ENCODE measurements at regions of chr11 and their contacts with region 1.

Region 1: DNA sequence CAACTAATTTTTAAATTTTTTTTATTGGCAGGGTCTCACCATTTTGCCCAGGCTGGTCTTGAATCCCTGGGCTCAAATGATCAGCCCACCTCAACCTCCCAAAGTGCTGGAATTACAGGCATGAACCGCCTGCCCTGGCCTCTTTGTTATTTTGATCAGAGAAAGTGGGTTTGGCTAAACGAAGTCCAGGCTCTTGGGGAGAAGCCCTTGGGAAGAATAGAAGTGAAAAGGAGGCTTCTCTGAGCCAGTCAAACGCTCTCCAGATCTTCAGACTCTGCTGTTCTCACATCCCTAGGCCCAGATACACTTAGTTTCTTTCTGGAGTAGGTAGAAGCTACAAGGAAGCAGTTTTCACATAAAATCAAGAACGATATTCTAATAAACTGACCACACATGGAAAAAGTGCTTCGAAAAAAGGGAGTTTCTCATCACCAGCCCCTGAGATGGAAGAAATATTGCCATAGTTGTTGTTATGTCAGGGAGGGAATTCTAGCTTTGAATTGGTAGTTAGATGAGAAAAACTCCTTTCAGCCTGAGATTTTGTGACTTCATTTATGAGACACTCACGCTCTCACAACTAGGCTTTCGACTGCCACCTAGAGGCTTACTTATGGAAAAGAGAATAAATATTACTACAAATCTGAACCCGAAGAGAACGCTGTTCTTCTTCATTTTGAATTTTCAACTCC is 41.7 kb upstream of the AQP11 start:
- DNase-seq: peak; percentile 56
- ATAC-seq: peak; percentile 60
- H3K4me3 ChIP-seq: no peak overlapping the region
- H3K27ac ChIP-seq: no peak overlapping the region
- H3K4me1 ChIP-seq: no peaks in the 10 kb centered on the region
- H3K27me3 ChIP-seq: no peaks in the 10 kb centered on the region
- CTCF ChIP-seq: peak; percentile 72
- EP300 ChIP-seq: no peak
- POLR2A ChIP-seq: no peak
- RAD21 ChIP-seq: peak; percentile 46; the same call in 1 of the 2 replicates

Region 2: GRCh38 chr11:77127232-77127911 is 420.6 kb before region 1 on chr11:
- CTCF ChIA-PET with region 1: interaction called, 6 read pairs
- POLR2A ChIA-PET with region 1: no interaction called
- in situ Hi-C with region 1: no loop called
- intact Hi-C with region 1: loop called (anchors 2 kb)
- DNase-seq: no peak
- ATAC-seq: peak; percentile 54
- H3K4me3 ChIP-seq: peak overlapping the region; percentile 53 to 80 (median 54); a peak in 5 of 6 replicates
- H3K27ac ChIP-seq: peak overlapping the region; percentile 12
- H3K4me1 ChIP-seq: peaks cover 57% of the 10 kb centered on the region
- H3K27me3 ChIP-seq: peaks cover 0 to 13% of the 10 kb centered on the region in 2 experiments; a peak in 1 of 5 replicates
- CTCF ChIP-seq: peak; percentile 98
- EP300 ChIP-seq: no peak
- POLR2A ChIP-seq: no peak
- RAD21 ChIP-seq: peak; percentile 99

Region 3: GRCh38 chr11:77187776-77188632 is 360.0 kb before region 1 on chr11:
- CTCF ChIA-PET with region 1: interaction called, 12 read pairs
- POLR2A ChIA-PET with region 1: no interaction called
- in situ Hi-C with region 1: no loop called
- intact Hi-C with region 1: loop called (anchors 1 kb)
- DNase-seq: peak; percentile 73
- ATAC-seq: peak; percentile 87
- H3K4me3 ChIP-seq: no peak overlapping the region
- H3K27ac ChIP-seq: no peak overlapping the region
- H3K4me1 ChIP-seq: no peaks in the 10 kb centered on the region
- H3K27me3 ChIP-seq: no peaks in the 10 kb centered on the region
- CTCF ChIP-seq: peak; percentile 94
- EP300 ChIP-seq: no peak
- POLR2A ChIP-seq: no peak
- RAD21 ChIP-seq: peak; percentile 85

Region 4: GRCh38 chr11:77198440-77198849 is 349.6 kb before region 1 on chr11:
- CTCF ChIA-PET with region 1: interaction called, 6 read pairs
- POLR2A ChIA-PET with region 1: no interaction called
- in situ Hi-C with region 1: loop called (anchors 5 kb)
- intact Hi-C with region 1: no loop called
- DNase-seq: peak; percentile 41
- ATAC-seq: peak; percentile 81
- H3K4me3 ChIP-seq: no peak overlapping the region
- H3K27ac ChIP-seq: no peak overlapping the region
- H3K4me1 ChIP-seq: no peaks in the 10 kb centered on the region
- H3K27me3 ChIP-seq: no peaks in the 10 kb centered on the region
- CTCF ChIP-seq: peak; percentile 63
- EP300 ChIP-seq: no peak
- POLR2A ChIP-seq: no peak
- RAD21 ChIP-seq: no peak

Region 5: GRCh38 chr11:77457340-77457739 is 90.7 kb before region 1 on chr11:
- CTCF ChIA-PET with region 1: no interaction called
- POLR2A ChIA-PET with region 1: no interaction called
- in situ Hi-C with region 1: no loop called
- intact Hi-C with region 1: no loop called
- DNase-seq: no peak
- ATAC-seq: no peak
- H3K4me3 ChIP-seq: no peak overlapping the region
- H3K27ac ChIP-seq: no peak overlapping the region
- H3K4me1 ChIP-seq: peaks cover 14% of the 10 kb centered on the region
- H3K27me3 ChIP-seq: no peaks in the 10 kb centered on the region; a peak in 1 of 5 replicates
- CTCF ChIP-seq: no peak
- EP300 ChIP-seq: no peak
- POLR2A ChIP-seq: no peak
- RAD21 ChIP-seq: no peak

Region 6: GRCh38 chr11:77473801-77474683 is 74.0 kb before region 1 on chr11 and contains the start of gene PAK1:
- CTCF ChIA-PET with region 1: no interaction called
- POLR2A ChIA-PET with region 1: no interaction called
- in situ Hi-C with region 1: no loop called
- intact Hi-C with region 1: loop called (anchors 5 kb)
- DNase-seq: peak; percentile 54
- ATAC-seq: peak; percentile 92
- H3K4me3 ChIP-seq: peak within 1 kb of the TSS; percentile 53 to 72 (median 63)
- H3K27ac ChIP-seq: no peak within 1 kb of the TSS
- H3K4me1 ChIP-seq: peaks cover 51% of the 10 kb centered on the region
- H3K27me3 ChIP-seq: peaks cover under 1 to 24% of the 10 kb centered on the region in 2 experiments; a peak in 2 of 5 replicates
- CTCF ChIP-seq: peak; percentile 58
- EP300 ChIP-seq: no peak
- POLR2A ChIP-seq: no peak
- RAD21 ChIP-seq: no peak
- total RNA-seq, gene PAK1: 1.5 and 3.1 TPM in 2 replicates

Region 7: GRCh38 chr11:77503015-77503414 is 45.0 kb before region 1 on chr11:
- CTCF ChIA-PET with region 1: no interaction called
- POLR2A ChIA-PET with region 1: no interaction called
- in situ Hi-C with region 1: no loop called
- intact Hi-C with region 1: no loop called
- DNase-seq: no peak
- ATAC-seq: no peak
- H3K4me3 ChIP-seq: no peak overlapping the region
- H3K27ac ChIP-seq: no peak overlapping the region
- H3K4me1 ChIP-seq: no peaks in the 10 kb centered on the region
- H3K27me3 ChIP-seq: no peaks in the 10 kb centered on the region; a peak in 2 of 5 replicates
- CTCF ChIP-seq: no peak
- EP300 ChIP-seq: no peak
- POLR2A ChIP-seq: no peak
- RAD21 ChIP-seq: no peak

Region 8: DNA sequence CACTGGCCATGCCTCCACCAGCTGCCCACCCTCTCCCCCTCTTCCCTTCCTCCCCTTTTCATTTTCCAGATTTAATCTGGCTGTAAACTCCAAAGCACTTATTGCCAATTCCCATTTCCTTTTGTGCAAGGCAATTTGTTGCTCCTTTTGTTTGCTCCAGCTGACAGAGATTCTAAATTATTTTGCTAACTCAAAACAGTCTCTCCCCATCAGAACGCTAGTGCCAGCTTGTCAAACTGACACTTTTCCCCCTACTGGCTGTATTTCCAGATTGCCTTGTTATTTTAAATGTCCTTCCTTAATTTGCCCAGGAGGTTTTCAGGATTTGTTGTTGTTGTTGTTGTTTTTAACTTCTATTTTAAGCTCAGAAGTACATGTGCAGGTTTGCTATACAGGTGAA is 17.1 kb before region 1 on chr11:
- CTCF ChIA-PET with region 1: no interaction called
- POLR2A ChIA-PET with region 1: no interaction called
- in situ Hi-C with region 1: no loop called
- intact Hi-C with region 1: no loop called
- DNase-seq: no peak
- ATAC-seq: no peak
- H3K4me3 ChIP-seq: no peak overlapping the region
- H3K27ac ChIP-seq: no peak overlapping the region
- H3K4me1 ChIP-seq: no peaks in the 10 kb centered on the region
- H3K27me3 ChIP-seq: no peaks in the 10 kb centered on the region
- CTCF ChIP-seq: no peak
- EP300 ChIP-seq: no peak
- POLR2A ChIP-seq: no peak
- RAD21 ChIP-seq: no peak

Measured in HepG2 (cell line).